Dendritic cell treated with granulocyte-macrophage colony-stimulating factor and Interleukin-4, amounts not matched to agents 40 ng/mL and 50 ng/mL, for 4 days (primary cell): ENCODE measurements at regions of chr6 and their contacts with region 1.

Region 1: DNA sequence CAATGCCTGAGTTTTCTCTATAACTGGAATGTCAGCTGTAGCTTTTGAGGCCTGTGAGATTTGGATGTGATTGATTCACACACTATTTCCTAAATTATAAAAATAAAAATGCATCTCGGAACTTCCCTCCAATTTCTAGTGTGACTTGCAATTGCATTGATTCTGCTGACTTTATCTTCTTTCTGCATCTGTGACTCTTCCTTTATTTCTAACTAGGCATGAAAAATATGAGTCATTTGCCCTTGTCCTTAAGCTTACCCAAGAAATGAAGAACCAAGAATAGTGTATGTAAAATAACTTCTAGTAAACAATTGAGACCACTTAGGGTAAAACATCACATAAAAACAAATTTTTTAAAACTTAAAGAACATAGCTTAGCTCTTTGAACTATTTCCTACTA is 12.9 kb downstream of the OR2J2 start:
- H3K4me3 Mint-ChIP-seq: no peak overlapping the region
- H3K27ac Mint-ChIP-seq: no peak overlapping the region
- H3K4me1 Mint-ChIP-seq: no peaks in the 10 kb centered on the region
- H3K27me3 Mint-ChIP-seq: no peaks in the 10 kb centered on the region

Region 2: GRCh38 chr6:28981833-28982475 is 201.6 kb before region 1 on chr6:
- intact Hi-C with region 1: no loop called
- H3K4me3 Mint-ChIP-seq: peak overlapping the region; percentile 76
- H3K27ac Mint-ChIP-seq: peak overlapping the region; percentile 59
- H3K4me1 Mint-ChIP-seq: peaks cover 37% of the 10 kb centered on the region
- H3K27me3 Mint-ChIP-seq: peaks cover 20% of the 10 kb centered on the region

Region 3: GRCh38 chr6:29005183-29005885 is 178.3 kb before region 1 on chr6 and contains the start of gene ZNF311:
- intact Hi-C with region 1: no loop called
- H3K4me3 Mint-ChIP-seq: peak within 1 kb of the TSS; percentile 84
- H3K27ac Mint-ChIP-seq: peak within 1 kb of the TSS; percentile 89
- H3K4me1 Mint-ChIP-seq: peaks cover 24% of the 10 kb centered on the region
- H3K27me3 Mint-ChIP-seq: peaks cover 11% of the 10 kb centered on the region

Region 4: GRCh38 chr6:29294499-29294914 is 110.9 kb after region 1 on chr6:
- intact Hi-C with region 1: loop called (anchors 5 kb)
- H3K4me3 Mint-ChIP-seq: no peak overlapping the region
- H3K27ac Mint-ChIP-seq: no peak overlapping the region
- H3K4me1 Mint-ChIP-seq: no peaks in the 10 kb centered on the region
- H3K27me3 Mint-ChIP-seq: no peaks in the 10 kb centered on the region

Region 5: DNA sequence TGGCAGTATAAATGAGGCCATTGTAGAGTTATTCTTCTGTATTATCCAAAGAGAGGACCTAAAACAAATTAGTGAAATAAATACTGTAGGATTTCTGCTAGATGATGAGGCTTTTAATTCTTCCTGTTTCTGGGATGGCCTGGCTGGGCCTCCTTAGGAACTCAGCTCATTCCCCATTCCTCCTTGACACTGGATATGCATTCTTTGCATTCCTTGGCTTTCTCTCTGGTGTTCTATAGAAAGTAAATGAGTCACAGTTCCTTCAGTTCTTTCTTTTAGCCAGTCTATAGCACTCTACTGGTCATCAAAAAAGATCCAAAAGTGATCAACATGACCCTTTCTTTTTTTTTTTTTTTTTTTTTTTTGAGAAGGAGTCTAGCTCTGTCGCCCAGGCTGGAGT is 264.1 kb after region 1 on chr6:
- intact Hi-C with region 1: no loop called
- H3K4me3 Mint-ChIP-seq: no peak overlapping the region
- H3K27ac Mint-ChIP-seq: no peak overlapping the region
- H3K4me1 Mint-ChIP-seq: no peaks in the 10 kb centered on the region
- H3K27me3 Mint-ChIP-seq: no peaks in the 10 kb centered on the region

Region 6: GRCh38 chr6:29864037-29864795 is 680.6 kb after region 1 on chr6:
- intact Hi-C with region 1: no loop called
- H3K4me3 Mint-ChIP-seq: no peak overlapping the region
- H3K27ac Mint-ChIP-seq: no peak overlapping the region
- H3K4me1 Mint-ChIP-seq: no peaks in the 10 kb centered on the region
- H3K27me3 Mint-ChIP-seq: peaks cover 70% of the 10 kb centered on the region